Activated CD4-positive, alpha-beta T cell treated with anti-CD3 and anti-CD28 coated beads, Interleukin-2, amount 10 ng/mL, durations not matched to agents 24 days and 14 days (primary cell): ENCODE measurements at regions of chr7 and their contacts with region 1.

Region 1: DNA sequence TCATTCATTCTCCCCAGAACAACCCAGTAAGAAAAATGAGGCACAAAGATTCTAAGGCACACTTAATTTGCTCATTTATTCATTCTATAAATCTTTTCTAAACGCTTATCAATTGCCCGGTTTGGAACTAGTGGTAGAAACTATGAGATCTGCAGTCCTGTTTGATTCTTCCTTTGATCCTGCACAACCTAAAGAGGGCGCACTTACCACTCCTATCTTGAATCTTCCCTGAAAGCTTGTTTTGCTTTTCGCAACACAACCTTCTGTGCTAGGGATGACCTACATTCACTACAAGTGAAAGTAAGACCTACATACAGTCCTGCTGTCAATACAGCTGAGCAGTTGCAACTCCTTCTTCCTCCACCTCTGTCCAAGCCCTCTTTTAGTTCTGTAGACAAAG is 12.6 kb upstream of the ARL4A start:
- DNase-seq: peak; percentile 87
- H3K4me3 Mint-ChIP-seq: no peak overlapping the region
- H3K27ac Mint-ChIP-seq: no peak overlapping the region
- H3K4me1 Mint-ChIP-seq: peaks cover 6% of the 10 kb centered on the region
- H3K27me3 Mint-ChIP-seq: peaks cover 1% of the 10 kb centered on the region

Region 2: DNA sequence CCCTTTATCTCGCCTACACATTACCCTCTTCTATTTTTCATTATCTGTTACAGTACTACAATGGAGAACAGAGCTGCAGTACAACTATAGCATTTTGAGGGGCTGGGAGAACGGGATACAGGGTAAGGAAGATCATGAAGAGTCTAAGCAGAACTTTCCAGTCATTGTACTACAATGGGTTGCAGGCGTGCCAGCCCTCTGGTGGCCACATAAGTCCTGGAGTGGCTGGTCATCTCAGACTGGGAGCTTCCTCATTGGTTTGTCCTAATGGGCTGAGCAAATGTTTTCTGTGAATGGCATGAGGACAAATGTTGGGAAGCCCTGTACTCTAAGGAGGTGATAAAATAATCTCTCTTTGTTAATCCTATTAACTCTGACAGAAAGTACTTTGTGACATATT is 430.7 kb before region 1 on chr7:
- intact Hi-C with region 1: no loop called
- DNase-seq: no peak
- H3K4me3 Mint-ChIP-seq: no peak overlapping the region
- H3K27ac Mint-ChIP-seq: no peak overlapping the region
- H3K4me1 Mint-ChIP-seq: peaks cover 2% of the 10 kb centered on the region
- H3K27me3 Mint-ChIP-seq: peaks cover 4% of the 10 kb centered on the region

Region 3: GRCh38 chr7:13262929-13263530 is 588.2 kb after region 1 on chr7:
- intact Hi-C with region 1: loop called (anchors 2 kb)
- DNase-seq: peak; percentile 57
- H3K4me3 Mint-ChIP-seq: no peak overlapping the region
- H3K27ac Mint-ChIP-seq: no peak overlapping the region
- H3K4me1 Mint-ChIP-seq: no peaks in the 10 kb centered on the region
- H3K27me3 Mint-ChIP-seq: no peaks in the 10 kb centered on the region